ENCODE measurements at regions of chr22 and their contacts with region 1.

Region 1: DNA sequence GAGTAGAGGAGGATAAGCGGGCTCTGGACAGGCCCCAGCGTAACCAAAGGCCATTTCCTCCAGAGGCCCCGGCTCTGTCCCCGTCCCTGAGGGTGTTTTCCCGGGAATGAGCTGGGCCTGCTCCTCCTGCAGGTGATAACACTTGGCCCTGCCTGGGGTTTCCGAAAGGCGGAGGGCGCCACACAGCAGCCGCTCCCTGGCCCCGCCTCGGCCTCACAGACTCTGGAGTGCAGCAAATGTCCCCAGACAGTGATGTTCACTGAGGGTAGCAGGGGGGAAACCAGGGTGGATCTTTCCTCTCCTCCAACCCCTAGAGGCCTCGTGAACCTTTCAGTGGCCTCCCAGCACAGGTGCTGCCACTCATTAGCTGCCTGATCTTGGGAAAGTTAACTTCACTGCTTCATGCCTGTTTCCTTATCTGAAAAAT is 10.5 kb upstream of the MGAT3 start:
- DNase-seq: no peak
- ATAC-seq: peak; percentile 48
- H3K4me3 ChIP-seq: peak overlapping the region in 3 of 5 experiments; percentile 1 to 67 (median 54)
- H3K4me3 Mint-ChIP-seq: peak overlapping the region; percentile 90
- H3K27ac ChIP-seq: peak overlapping the region; percentile 60 to 89
- H3K27ac Mint-ChIP-seq: peak overlapping the region; percentile 95
- H3K4me1 ChIP-seq: peaks cover 69 to 81% of the 10 kb centered on the region in 2 donors
- H3K4me1 Mint-ChIP-seq: peaks cover 77% of the 10 kb centered on the region
- H3K27me3 ChIP-seq: no peaks in the 10 kb centered on the region
- H3K27me3 Mint-ChIP-seq: no peaks in the 10 kb centered on the region
- CTCF ChIP-seq: no peak

Region 2: GRCh38 chr22:39405346-39406085 is 40.8 kb before region 1 on chr22:
- CTCF ChIA-PET with region 1: interaction called, 14 read pairs
- POLR2A ChIA-PET with region 1: no interaction called
- intact Hi-C with region 1: no loop called
- DNase-seq: no peak
- ATAC-seq: no peak
- H3K4me3 ChIP-seq: no peak overlapping the region
- H3K4me3 Mint-ChIP-seq: no peak overlapping the region
- H3K27ac ChIP-seq: no peak overlapping the region
- H3K27ac Mint-ChIP-seq: no peak overlapping the region
- H3K4me1 ChIP-seq: peaks cover 6 to 9% of the 10 kb centered on the region in 2 donors
- H3K4me1 Mint-ChIP-seq: peaks cover 30% of the 10 kb centered on the region
- H3K27me3 ChIP-seq: no peaks in the 10 kb centered on the region
- H3K27me3 Mint-ChIP-seq: no peaks in the 10 kb centered on the region
- CTCF ChIP-seq: no peak

Region 3: DNA sequence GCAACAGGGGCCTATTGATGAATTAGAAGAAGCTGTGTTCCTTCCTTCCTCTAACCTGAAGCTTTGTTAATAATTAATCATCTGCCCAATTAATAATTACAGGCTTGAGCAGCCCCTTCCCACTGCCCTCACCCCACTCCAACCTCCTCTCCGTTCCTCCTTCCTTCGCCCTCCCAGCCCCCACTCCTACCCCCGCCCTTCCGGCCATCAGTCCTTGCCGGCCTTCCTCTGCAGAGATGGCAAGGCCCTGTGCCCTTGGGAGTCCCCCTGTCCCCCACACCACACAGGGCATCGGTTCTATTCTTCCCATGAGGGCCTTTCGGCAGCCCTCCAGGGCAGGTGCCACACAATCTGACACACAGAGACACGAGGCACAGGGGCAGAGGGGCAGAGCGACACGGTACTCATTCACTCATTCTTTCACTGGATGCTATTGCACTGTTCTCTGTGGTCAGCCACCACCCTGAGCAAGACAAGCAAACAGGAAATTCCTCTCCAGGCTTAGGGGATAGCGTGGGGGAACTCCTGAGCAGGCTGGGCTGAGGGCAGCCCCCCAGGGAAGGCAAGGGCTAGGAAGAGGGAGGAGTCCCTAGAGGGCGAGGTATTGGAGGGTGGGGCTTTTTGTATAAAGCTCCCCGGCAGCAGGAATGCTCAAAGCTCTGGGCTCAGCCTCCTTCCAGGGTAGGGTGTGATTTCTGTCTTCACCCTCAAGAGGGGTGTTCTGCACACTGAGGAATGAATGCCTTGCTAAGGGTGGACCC is 25.3 kb after region 1 on chr22:
- CTCF ChIA-PET with region 1: interaction called, 4 read pairs
- POLR2A ChIA-PET with region 1: interaction called, 8 read pairs
- intact Hi-C with region 1: loop called (anchors 2 kb)
- DNase-seq: peak; percentile 43
- ATAC-seq: peak; percentile 60
- H3K4me3 ChIP-seq: peak overlapping the region in 1 of 5 experiments; percentile 14
- H3K4me3 Mint-ChIP-seq: peak overlapping the region; percentile 85
- H3K27ac ChIP-seq: peak overlapping the region; percentile 40 to 68
- H3K27ac Mint-ChIP-seq: peak overlapping the region; percentile 89
- H3K4me1 ChIP-seq: peaks cover 41 to 69% of the 10 kb centered on the region in 2 donors
- H3K4me1 Mint-ChIP-seq: peaks cover 64% of the 10 kb centered on the region
- H3K27me3 ChIP-seq: no peaks in the 10 kb centered on the region
- H3K27me3 Mint-ChIP-seq: no peaks in the 10 kb centered on the region
- CTCF ChIP-seq: no peak

Region 4: GRCh38 chr22:39502109-39502788 is 55.9 kb after region 1 on chr22 and contains the start of gene MIEF1:
- CTCF ChIA-PET with region 1: interaction called, 6 read pairs
- POLR2A ChIA-PET with region 1: interaction called, 8 read pairs
- intact Hi-C with region 1: loop called (anchors 2 kb)
- DNase-seq: peak; percentile 93
- ATAC-seq: peak; percentile 98
- H3K4me3 ChIP-seq: peak within 1 kb of the TSS; percentile 48 to 85 (median 83)
- H3K4me3 Mint-ChIP-seq: peak within 1 kb of the TSS; percentile 96
- H3K27ac ChIP-seq: peak within 1 kb of the TSS; percentile 45 to 74
- H3K27ac Mint-ChIP-seq: peak within 1 kb of the TSS; percentile 93
- H3K4me1 ChIP-seq: peaks cover 16 to 25% of the 10 kb centered on the region in 2 donors
- H3K4me1 Mint-ChIP-seq: peaks cover 39% of the 10 kb centered on the region
- H3K27me3 ChIP-seq: no peaks in the 10 kb centered on the region
- H3K27me3 Mint-ChIP-seq: no peaks in the 10 kb centered on the region
- CTCF ChIP-seq: no peak
- total RNA-seq, gene MIEF1: 37.2 and 43.4 TPM in 2 replicates

Measured in B cell (primary cell).